HCT116 (cell line): ENCODE measurements at regions of chr1 and their contacts with region 1.

Region 1: GRCh38 chr1:30684881-30685795 is 38.2 kb downstream of the MATN1 start:
- DNase-seq: peak; percentile 90
- ATAC-seq: peak; percentile 98
- H3K4me3 ChIP-seq: peak overlapping the region; percentile 43 to 55
- H3K27ac ChIP-seq: peak overlapping the region; percentile 52; the same call in 1 of the 2 replicates
- H3K4me1 ChIP-seq: peaks cover 10 to 21% of the 10 kb centered on the region in 2 experiments; a peak in 3 of 4 replicates
- H3K27me3 ChIP-seq: no peaks in the 10 kb centered on the region
- CTCF ChIP-seq: peak; percentile 24 to 71 (median 26); a peak in 3 of 6 replicates
- POLR2A ChIP-seq: no peak
- RAD21 ChIP-seq: peak; percentile 70

Region 2: GRCh38 chr1:30407865-30408580 is 277.1 kb before region 1 on chr1:
- CTCF ChIA-PET with region 1: interaction called, 8 read pairs
- POLR2A ChIA-PET with region 1: no interaction called
- RAD21 ChIA-PET with region 1: no interaction called
- intact Hi-C with region 1: loop called (anchors 1 kb)
- DNase-seq: no peak
- ATAC-seq: no peak
- H3K4me3 ChIP-seq: no peak overlapping the region
- H3K27ac ChIP-seq: no peak overlapping the region
- H3K4me1 ChIP-seq: peaks cover 0 to 14% of the 10 kb centered on the region in 2 experiments; a peak in 1 of 4 replicates
- H3K27me3 ChIP-seq: no peaks in the 10 kb centered on the region
- CTCF ChIP-seq: no peak
- POLR2A ChIP-seq: no peak
- RAD21 ChIP-seq: no peak

Region 3: DNA sequence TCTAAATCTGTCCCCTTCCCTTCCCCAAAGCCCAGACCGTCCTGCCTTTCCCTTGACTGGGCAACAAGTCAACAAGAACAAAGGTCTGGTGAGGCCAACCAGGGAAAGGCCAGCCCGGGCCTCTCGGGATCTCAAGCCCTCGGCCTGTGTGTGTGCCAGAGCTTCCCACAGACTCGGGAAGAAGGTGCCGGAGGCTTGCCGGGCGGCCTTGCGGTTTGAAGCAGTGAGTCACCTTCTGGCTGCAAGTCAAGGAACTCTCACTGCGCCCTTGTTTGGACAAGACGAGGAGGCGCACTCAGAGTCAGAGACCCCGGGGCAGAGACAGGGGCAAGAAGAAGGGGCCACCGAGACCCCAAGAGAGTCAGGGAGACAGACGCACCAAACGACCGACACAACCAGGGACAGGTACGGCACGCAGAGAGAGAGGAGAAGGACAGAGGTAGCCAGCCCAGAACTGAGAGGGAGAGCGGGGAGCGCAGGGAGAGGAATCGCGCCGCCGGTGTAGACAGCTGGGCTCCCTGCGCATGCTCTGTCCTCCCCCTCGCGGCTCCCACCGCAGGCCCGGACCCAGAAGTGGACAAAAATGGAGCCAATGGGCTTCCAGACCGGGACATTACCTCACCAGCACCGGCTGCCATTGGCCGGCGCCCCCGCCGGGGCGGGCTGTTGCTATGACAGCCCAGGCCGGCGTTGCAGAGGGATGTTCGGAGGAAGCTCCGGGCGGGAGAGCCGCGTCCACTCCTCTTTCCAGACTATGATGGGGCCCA is 139.0 kb after region 1 on chr1:
- CTCF ChIA-PET with region 1: no interaction called
- POLR2A ChIA-PET with region 1: no interaction called
- RAD21 ChIA-PET with region 1: no interaction called
- intact Hi-C with region 1: no loop called
- DNase-seq: peak; percentile 93
- ATAC-seq: peak; percentile 92
- H3K4me3 ChIP-seq: peak overlapping the region; percentile 46 to 48
- H3K27ac ChIP-seq: peak overlapping the region; percentile 64
- H3K4me1 ChIP-seq: peaks cover 17% of the 10 kb centered on the region in 2 experiments
- H3K27me3 ChIP-seq: peaks cover 9% of the 10 kb centered on the region; the same call in 1 of the 2 replicates
- CTCF ChIP-seq: no peak
- POLR2A ChIP-seq: no peak
- RAD21 ChIP-seq: no peak